Esophagus muscularis mucosa (tissue), 4 donors: ENCODE measurements at regions of chr12 and their contacts with region 1.

Region 1: GRCh38 chr12:98572010-98572409 is 21.5 kb upstream of the SLC25A3 start:
- DNase-seq: no peak
- H3K4me3 ChIP-seq: no peak overlapping the region
- H3K27ac ChIP-seq: no peak overlapping the region
- H3K4me1 ChIP-seq: peaks cover 0 to 4% (median 0%) of the 10 kb centered on the region in 4 donors
- H3K27me3 ChIP-seq: no peaks in the 10 kb centered on the region
- CTCF ChIP-seq: no peak
- EP300 ChIP-seq: no peak
- POLR2A ChIP-seq: no peak

Region 2: GRCh38 chr12:98606357-98606988 is 34.5 kb after region 1 on chr12:
- intact Hi-C with region 1: no loop called
- DNase-seq: no peak
- H3K4me3 ChIP-seq: no peak overlapping the region
- H3K27ac ChIP-seq: no peak overlapping the region
- H3K4me1 ChIP-seq: no peaks in the 10 kb centered on the region
- H3K27me3 ChIP-seq: no peaks in the 10 kb centered on the region
- CTCF ChIP-seq: no peak
- EP300 ChIP-seq: no peak
- POLR2A ChIP-seq: no peak

Region 3: DNA sequence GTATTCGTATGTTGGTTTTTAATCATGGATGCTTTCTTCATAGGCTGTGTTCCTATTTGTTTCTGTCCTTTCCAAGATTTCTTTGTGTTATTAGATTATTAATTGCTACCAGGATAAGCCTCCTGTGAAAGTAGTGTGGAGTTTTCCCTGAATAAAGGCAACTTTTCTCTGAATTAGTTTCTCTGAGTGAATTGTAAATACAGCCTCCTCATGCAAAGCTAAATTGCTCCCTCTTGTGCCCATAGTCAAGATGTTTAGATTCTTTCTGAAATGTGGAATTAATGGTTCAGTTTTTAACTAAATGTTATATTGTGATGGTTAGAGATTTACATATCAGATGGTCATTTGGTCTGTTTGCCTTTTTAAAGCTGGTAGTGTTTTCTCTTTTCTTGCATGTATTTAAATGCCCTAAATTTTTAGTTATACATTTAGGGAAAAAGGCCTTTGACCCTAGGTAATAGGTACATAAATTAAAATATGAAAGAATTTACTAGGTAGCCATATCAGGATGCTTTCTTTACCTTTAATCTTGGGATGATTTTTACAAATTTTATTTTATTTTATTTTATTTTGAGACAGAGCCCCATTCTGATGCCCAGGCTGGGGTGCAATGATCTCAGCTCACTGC is 82.0 kb after region 1 on chr12:
- intact Hi-C with region 1: loop called (anchors 5 kb)
- DNase-seq: no peak
- H3K4me3 ChIP-seq: no peak overlapping the region
- H3K27ac ChIP-seq: no peak overlapping the region
- H3K4me1 ChIP-seq: no peaks in the 10 kb centered on the region
- H3K27me3 ChIP-seq: no peaks in the 10 kb centered on the region
- CTCF ChIP-seq: peak; percentile 47 to 57 (median 56)
- EP300 ChIP-seq: no peak
- POLR2A ChIP-seq: no peak